ENCODE measurements at regions of chr3 and their contacts with region 1.

Region 1: DNA sequence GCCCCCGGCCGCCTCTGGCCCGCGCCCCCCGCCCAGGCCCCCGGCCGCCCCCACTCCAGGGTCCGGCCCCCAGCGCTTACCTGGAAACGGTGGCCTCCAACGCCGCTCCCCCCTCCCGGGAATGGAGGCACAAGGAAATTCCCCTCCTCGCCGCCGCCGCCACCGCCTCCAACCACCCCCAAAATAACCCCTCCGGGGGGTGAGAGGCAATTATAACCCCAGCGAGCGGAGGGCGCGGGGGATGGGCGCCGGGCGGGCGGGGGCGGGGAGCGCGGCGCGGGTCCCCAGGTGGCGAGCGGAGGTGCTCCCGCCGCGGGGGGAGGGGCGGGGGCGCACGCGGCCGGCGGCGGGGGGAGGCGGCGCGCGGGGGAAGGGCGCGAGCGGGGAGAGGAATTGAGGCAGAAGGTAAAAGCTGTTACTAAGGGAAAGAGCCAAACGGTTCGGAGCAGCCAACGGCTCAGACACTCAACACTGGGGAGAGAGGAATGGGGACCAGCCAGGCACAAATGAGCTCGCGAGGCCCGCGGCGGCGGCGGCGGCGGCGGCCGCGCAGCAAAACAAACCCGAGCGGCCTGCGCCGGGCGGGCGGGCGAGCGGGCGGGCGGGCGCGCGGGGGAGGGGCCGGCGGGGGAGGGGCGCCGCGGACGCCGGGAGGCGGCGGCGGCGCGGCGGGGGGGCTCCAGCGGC is at the start of gene TBL1XR1:
- DNase-seq: peak; percentile 78 to 93 (median 90)
- ATAC-seq: peak; percentile 81
- H3K4me3 ChIP-seq: peak within 1 kb of the TSS; percentile 91
- H3K4me3 Mint-ChIP-seq: peak within 1 kb of the TSS; percentile 93 to 99 (median 98)
- H3K27ac ChIP-seq: peak within 1 kb of the TSS; percentile 94
- H3K27ac Mint-ChIP-seq: peak within 1 kb of the TSS; percentile 94 to 100 (median 98)
- H3K4me1 ChIP-seq: peaks cover 40 to 48% of the 10 kb centered on the region in 2 donors
- H3K4me1 Mint-ChIP-seq: peaks cover 35 to 68% (median 64%) of the 10 kb centered on the region in 7 donors
- H3K27me3 ChIP-seq: no peaks in the 10 kb centered on the region
- H3K27me3 Mint-ChIP-seq: peaks cover 0 to 2% (median 0%) of the 10 kb centered on the region in 5 donors
- total RNA-seq, gene TBL1XR1: 98.9 to 173 (median 133) TPM

Region 2: GRCh38 chr3:176872771-176873209 is 324.4 kb before region 1 on chr3:
- CTCF ChIA-PET with region 1: interaction called, 3 read pairs
- POLR2A ChIA-PET with region 1: no interaction called
- intact Hi-C with region 1: loop called in 1 of 2 experiments (anchors 5 kb)
- DNase-seq: peak; percentile 10 to 61 (median 39)
- ATAC-seq: peak; percentile 83
- H3K4me3 ChIP-seq: no peak overlapping the region
- H3K4me3 Mint-ChIP-seq: no peak overlapping the region
- H3K27ac ChIP-seq: no peak overlapping the region
- H3K27ac Mint-ChIP-seq: peak overlapping the region in 3 of 9 donors; percentile 8 to 63 (median 26)
- H3K4me1 ChIP-seq: no peaks in the 10 kb centered on the region
- H3K4me1 Mint-ChIP-seq: peaks cover 0 to 9% (median 6%) of the 10 kb centered on the region in 7 donors
- H3K27me3 ChIP-seq: no peaks in the 10 kb centered on the region
- H3K27me3 Mint-ChIP-seq: peaks cover 0 to 11% (median 3%) of the 10 kb centered on the region in 5 donors

Region 3: DNA sequence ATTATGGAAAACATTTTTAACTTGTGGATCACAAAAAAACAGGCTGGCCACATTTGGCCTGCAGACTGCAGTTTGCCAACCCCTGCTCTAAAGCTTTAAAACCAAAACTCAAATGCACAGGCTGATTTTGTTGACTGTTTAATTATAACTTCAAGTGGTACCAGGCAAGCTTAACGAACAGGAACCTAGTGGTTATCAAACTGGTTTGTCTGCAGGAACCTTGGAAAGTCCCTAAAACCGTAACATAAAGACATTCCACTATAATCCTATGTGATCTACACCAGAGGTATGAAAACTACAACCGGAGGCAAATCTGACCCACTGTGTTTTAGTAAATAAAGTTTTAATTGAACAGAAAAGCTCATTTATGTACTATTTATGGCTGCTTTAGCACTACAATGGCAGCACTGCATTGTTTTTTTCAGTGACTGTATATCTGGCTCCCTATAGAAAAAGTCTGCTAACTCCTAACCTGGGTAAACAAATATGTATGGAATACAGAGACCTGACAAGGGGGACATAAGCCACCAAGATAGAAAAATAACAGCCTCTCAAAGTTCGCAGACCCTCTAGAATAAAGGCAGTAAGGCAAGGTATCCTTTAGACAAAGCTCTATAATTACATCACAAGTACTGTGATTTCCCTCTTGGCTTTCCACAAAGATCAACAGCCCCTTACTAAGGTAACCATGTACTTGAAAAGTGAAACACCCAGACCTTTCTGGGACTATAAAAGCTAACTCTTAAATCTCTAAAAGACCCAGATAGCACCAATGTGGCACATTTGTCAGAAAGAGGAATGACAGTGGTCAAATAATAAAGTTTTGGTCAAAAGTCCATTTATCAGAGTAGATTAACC is 52.0 kb before region 1 on chr3:
- CTCF ChIA-PET with region 1: interaction called, 3 read pairs
- POLR2A ChIA-PET with region 1: interaction called, 9 read pairs
- intact Hi-C with region 1: loop called (anchors 1 kb)
- DNase-seq: peak in 7 of 9 donors; percentile 25 to 67 (median 41)
- ATAC-seq: peak; percentile 91
- H3K4me3 ChIP-seq: peak overlapping the region; percentile 30
- H3K4me3 Mint-ChIP-seq: peak overlapping the region in 9 of 10 donors; percentile 51 to 74 (median 68)
- H3K27ac ChIP-seq: peak overlapping the region; percentile 47
- H3K27ac Mint-ChIP-seq: peak overlapping the region; percentile 64 to 94 (median 84)
- H3K4me1 ChIP-seq: peaks cover 39 to 40% of the 10 kb centered on the region in 2 donors
- H3K4me1 Mint-ChIP-seq: peaks cover 41 to 89% (median 71%) of the 10 kb centered on the region in 7 donors
- H3K27me3 ChIP-seq: no peaks in the 10 kb centered on the region
- H3K27me3 Mint-ChIP-seq: no peaks in the 10 kb centered on the region

Region 4: DNA sequence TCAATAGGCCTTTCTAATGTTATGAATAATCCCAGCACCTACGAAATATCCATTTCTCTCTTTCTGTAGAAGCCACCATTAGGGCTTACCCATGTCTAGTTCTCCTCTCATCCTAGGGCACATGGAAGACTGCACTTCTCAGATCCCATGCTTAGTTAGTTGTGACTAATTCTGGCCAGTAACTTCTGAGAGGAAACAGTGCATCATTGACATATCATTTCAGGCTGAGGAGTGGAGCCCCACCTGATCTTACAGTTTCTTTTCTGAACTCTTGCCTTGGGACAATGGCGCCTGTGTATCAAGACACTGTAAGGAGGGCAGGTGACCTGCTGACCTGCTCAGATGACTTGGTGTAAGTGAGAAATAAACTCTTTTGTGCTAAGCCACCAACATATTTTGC is 39.5 kb after region 1 on chr3:
- CTCF ChIA-PET with region 1: no interaction called
- POLR2A ChIA-PET with region 1: no interaction called
- intact Hi-C with region 1: loop called (anchors 5 kb)
- DNase-seq: no peak
- ATAC-seq: no peak
- H3K4me3 ChIP-seq: no peak overlapping the region
- H3K4me3 Mint-ChIP-seq: no peak overlapping the region
- H3K27ac ChIP-seq: no peak overlapping the region
- H3K27ac Mint-ChIP-seq: peak overlapping the region in 1 of 9 donors; percentile 12
- H3K4me1 ChIP-seq: peaks cover 0 to 3% of the 10 kb centered on the region in 2 donors
- H3K4me1 Mint-ChIP-seq: peaks cover 0 to 7% (median 5%) of the 10 kb centered on the region in 7 donors
- H3K27me3 ChIP-seq: no peaks in the 10 kb centered on the region
- H3K27me3 Mint-ChIP-seq: no peaks in the 10 kb centered on the region

Region 5: GRCh38 chr3:177320765-177321247 is 123.6 kb after region 1 on chr3:
- CTCF ChIA-PET with region 1: no interaction called
- POLR2A ChIA-PET with region 1: interaction called, 5 read pairs
- intact Hi-C with region 1: loop called in 1 of 2 experiments (anchors 1 kb)
- DNase-seq: peak in 7 of 9 donors; percentile 18 to 61 (median 52)
- ATAC-seq: no peak
- H3K4me3 ChIP-seq: no peak overlapping the region
- H3K4me3 Mint-ChIP-seq: peak overlapping the region; percentile 4 to 75 (median 60)
- H3K27ac ChIP-seq: no peak overlapping the region
- H3K27ac Mint-ChIP-seq: peak overlapping the region; percentile 11 to 90 (median 74)
- H3K4me1 ChIP-seq: peaks cover 0 to 14% of the 10 kb centered on the region in 2 donors
- H3K4me1 Mint-ChIP-seq: peaks cover 17 to 47% (median 38%) of the 10 kb centered on the region in 7 donors
- H3K27me3 ChIP-seq: no peaks in the 10 kb centered on the region
- H3K27me3 Mint-ChIP-seq: no peaks in the 10 kb centered on the region

Region 6: DNA sequence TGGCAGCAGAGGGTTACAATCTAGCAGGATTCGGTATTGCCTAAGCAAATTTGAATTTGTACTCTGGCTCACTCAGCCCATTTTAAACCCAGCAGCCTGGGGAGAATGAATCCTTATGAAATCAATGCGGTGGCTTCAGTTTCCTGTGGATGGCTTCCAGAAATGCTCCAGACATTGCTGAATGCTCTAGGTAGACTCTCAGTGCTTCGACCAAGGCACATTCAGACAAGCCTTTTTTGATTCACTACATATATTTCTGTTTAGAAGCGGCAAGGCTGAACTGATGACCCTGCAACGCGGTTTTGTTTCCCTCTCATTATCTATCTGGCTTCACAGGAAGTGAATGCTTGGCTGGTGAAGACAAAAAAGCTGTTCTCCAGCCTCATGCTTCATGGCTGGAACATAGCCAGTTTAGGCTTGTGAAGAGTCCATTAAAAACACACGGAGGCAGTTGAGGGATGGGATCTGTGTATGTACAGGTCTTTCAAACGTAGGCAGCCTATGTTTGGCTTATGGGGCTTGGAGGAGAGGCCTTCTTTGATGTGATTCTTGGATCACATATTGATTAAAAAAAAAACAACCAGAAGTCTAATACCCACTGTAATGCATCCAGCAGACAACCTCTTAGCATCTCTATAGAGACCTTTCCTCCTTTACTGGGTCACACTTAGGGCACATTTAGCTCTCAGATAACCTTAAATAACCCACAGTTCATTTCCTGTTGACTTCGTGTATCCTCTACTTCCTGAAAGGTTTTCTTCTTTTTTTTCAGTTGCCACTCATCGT is 400.3 kb after region 1 on chr3:
- CTCF ChIA-PET with region 1: interaction called, 3 read pairs
- POLR2A ChIA-PET with region 1: interaction called, 5 read pairs
- intact Hi-C with region 1: loop called (anchors 1 to 5 kb)
- DNase-seq: peak in 7 of 9 donors; percentile 36 to 75 (median 65)
- ATAC-seq: peak; percentile 93
- H3K4me3 ChIP-seq: peak overlapping the region; percentile 21
- H3K4me3 Mint-ChIP-seq: peak overlapping the region; percentile 51 to 80 (median 72)
- H3K27ac ChIP-seq: peak overlapping the region; percentile 54
- H3K27ac Mint-ChIP-seq: peak overlapping the region; percentile 77 to 97 (median 91)
- H3K4me1 ChIP-seq: peaks cover 39 to 50% of the 10 kb centered on the region in 2 donors
- H3K4me1 Mint-ChIP-seq: peaks cover 51 to 87% (median 83%) of the 10 kb centered on the region in 7 donors
- H3K27me3 ChIP-seq: no peaks in the 10 kb centered on the region
- H3K27me3 Mint-ChIP-seq: no peaks in the 10 kb centered on the region

Region 7: DNA sequence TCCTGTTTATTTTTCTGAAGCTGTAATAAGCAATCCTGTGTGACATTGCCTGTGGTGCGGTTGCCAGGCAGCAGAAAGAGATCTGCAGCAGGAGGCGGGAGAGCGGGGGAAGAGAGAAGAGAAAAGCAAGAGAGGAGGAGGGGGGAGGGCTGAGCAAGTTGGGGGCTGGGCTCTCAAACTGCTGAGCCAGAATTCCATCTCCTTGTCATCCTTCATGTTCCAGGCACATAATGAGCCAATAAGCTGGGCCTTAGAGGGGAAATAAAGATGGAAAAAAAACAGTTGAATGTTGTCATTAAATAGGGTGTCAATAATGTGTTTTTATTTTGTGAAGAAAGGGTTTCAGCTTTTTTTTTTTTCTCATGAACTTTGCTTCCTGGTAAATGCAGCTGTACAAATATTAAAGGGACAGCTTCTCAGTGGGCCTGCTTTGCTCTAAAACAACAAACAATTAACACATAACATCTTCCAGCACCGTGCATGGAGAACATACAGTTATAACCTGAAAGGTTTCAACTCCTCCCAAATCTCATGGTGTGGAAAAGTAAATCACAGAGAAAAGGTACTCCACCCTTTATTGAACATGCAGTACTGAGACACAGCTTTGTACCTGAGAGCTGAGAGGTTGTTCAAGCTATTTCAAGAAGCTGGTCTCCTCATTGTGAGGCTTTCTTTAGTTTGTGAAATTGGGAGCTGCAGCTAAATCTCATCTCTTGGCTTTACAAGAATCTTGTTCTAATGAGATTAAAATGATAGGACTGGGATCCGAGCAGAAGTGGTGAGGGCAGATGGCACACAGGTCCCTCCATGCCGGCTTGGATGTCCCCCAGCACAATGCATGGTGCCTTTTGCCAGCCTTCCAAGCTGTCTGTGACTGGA is 888.0 kb after region 1 on chr3:
- CTCF ChIA-PET with region 1: no interaction called
- POLR2A ChIA-PET with region 1: no interaction called
- intact Hi-C with region 1: loop called (anchors 1 to 5 kb)
- DNase-seq: peak in 8 of 9 donors; percentile 15 to 84 (median 72)
- ATAC-seq: peak; percentile 95
- H3K4me3 ChIP-seq: no peak overlapping the region
- H3K4me3 Mint-ChIP-seq: peak overlapping the region; percentile 65 to 85 (median 76)
- H3K27ac ChIP-seq: peak overlapping the region; percentile 39
- H3K27ac Mint-ChIP-seq: peak overlapping the region; percentile 26 to 95 (median 85)
- H3K4me1 ChIP-seq: peaks cover 0 to 32% of the 10 kb centered on the region in 2 donors
- H3K4me1 Mint-ChIP-seq: peaks cover 16 to 68% (median 54%) of the 10 kb centered on the region in 7 donors
- H3K27me3 ChIP-seq: no peaks in the 10 kb centered on the region
- H3K27me3 Mint-ChIP-seq: no peaks in the 10 kb centered on the region

Measured in naive thymus-derived CD4-positive, alpha-beta T cell (primary cell).